Activated CD8-positive, alpha-beta T cell treated with anti-CD3 and anti-CD28 coated beads for 36 hours (primary cell): ENCODE measurements at regions of chr13 and their contacts with region 1.

Region 1: GRCh38 chr13:24053519-24054251 is 106.8 kb upstream of the SPATA13 start:
- DNase-seq: peak; percentile 77
- ATAC-seq: peak; percentile 98
- H3K4me3 Mint-ChIP-seq: no peak overlapping the region
- H3K27ac Mint-ChIP-seq: no peak overlapping the region
- H3K4me1 Mint-ChIP-seq: peaks cover 8% of the 10 kb centered on the region
- H3K27me3 Mint-ChIP-seq: peaks cover 1% of the 10 kb centered on the region
- CTCF ChIP-seq: peak; percentile 85

Region 2: GRCh38 chr13:24020375-24020830 is 33.3 kb before region 1 on chr13:
- CTCF ChIA-PET with region 1: interaction called, 11 read pairs
- POLR2A ChIA-PET with region 1: no interaction called
- intact Hi-C with region 1: no loop called
- DNase-seq: peak; percentile 69
- ATAC-seq: peak; percentile 47
- H3K4me3 Mint-ChIP-seq: no peak overlapping the region
- H3K27ac Mint-ChIP-seq: no peak overlapping the region
- H3K4me1 Mint-ChIP-seq: peaks cover 8% of the 10 kb centered on the region
- H3K27me3 Mint-ChIP-seq: no peaks in the 10 kb centered on the region
- CTCF ChIP-seq: peak; percentile 79

Region 3: DNA sequence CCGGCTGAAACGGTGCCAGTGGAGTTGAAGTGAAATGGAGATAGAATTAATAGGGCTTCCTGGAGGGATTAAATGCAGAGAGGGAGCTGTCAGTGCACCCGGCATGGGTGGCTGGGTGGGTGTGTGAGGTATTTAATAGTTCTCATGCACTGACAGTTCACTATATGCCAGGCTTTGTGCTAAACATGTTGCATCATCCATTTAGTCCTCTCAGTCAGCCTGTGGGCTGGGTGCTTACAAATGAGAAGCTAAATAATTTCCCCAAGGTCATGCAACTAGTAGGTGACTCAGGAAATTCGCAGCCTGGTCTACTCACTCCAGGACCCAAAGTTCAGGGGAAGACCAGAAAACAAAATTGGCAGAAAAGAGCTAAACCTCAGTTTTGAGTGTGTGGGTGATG is 43.4 kb after region 1 on chr13:
- CTCF ChIA-PET with region 1: interaction called, 12 read pairs
- POLR2A ChIA-PET with region 1: no interaction called
- intact Hi-C with region 1: loop called (anchors 1 kb)
- DNase-seq: peak; percentile 83
- ATAC-seq: peak; percentile 93
- H3K4me3 Mint-ChIP-seq: peak overlapping the region; percentile 3
- H3K27ac Mint-ChIP-seq: peak overlapping the region; percentile 56
- H3K4me1 Mint-ChIP-seq: peaks cover 18% of the 10 kb centered on the region
- H3K27me3 Mint-ChIP-seq: peaks cover 8% of the 10 kb centered on the region
- CTCF ChIP-seq: no peak